Ascending aorta (tissue), 2 donors: ENCODE measurements at regions of chr19 and their contacts with region 1.

Region 1: DNA sequence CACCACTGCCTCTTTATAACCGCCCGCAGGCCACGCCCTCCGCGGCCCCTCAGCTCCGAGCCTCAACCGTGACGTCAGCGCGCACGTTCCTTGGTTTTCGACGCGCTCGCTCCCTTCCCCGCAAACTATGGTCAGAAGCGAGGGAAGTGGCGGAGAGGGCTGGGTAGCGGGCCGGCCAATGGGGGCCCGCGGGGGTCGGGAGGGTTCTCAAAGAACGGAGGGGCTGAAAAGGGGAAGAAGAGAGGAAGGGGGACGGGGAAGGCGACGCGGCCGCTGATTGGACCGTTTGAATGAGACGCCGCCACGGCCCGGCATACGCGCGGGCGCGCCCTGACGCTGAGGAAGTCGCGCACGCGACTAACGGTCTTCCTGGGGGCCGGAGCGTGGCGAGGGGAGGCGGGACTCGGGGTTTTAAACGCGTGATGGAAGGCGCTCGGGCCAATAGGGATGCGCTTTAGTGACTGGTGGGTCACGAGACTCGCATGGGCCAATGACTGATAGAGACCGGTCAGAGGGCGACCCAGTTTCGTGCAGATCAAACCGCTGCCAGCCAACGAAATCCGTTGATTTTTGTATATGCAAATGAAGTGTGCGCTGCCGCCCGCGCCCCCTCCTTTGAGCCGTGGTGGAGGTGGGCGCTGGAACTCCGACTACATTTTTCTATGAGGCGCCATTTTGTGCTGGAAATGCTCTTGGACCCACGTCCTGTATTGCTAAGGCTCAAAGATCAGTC is 378 bp upstream of the UBE2S start:
- DNase-seq: peak; percentile 95 to 99
- H3K4me3 ChIP-seq: peak overlapping the region; percentile 86 to 92
- H3K27ac ChIP-seq: peak overlapping the region; percentile 96 to 99
- H3K4me1 ChIP-seq: peaks cover 11 to 13% of the 10 kb centered on the region in 2 donors
- H3K27me3 ChIP-seq: no peaks in the 10 kb centered on the region
- CTCF ChIP-seq: no peak

Region 2: GRCh38 chr19:55476100-55476775 is 68.3 kb after region 1 on chr19 and contains the start of gene ZNF628:
- intact Hi-C with region 1: loop called (anchors 2 kb)
- DNase-seq: peak; percentile 93 to 99
- H3K4me3 ChIP-seq: peak within 1 kb of the TSS; percentile 82 to 84
- H3K27ac ChIP-seq: peak within 1 kb of the TSS; percentile 95 to 99
- H3K4me1 ChIP-seq: peaks cover 8 to 11% of the 10 kb centered on the region in 2 donors
- H3K27me3 ChIP-seq: no peaks in the 10 kb centered on the region
- CTCF ChIP-seq: no peak
- total RNA-seq, gene ZNF628: 13.2 TPM